Naive thymus-derived CD4-positive, alpha-beta T cell (primary cell): ENCODE measurements at regions of chr2 and their contacts with region 1.

Region 1: GRCh38 chr2:238203094-238203972 is at the start of gene ILKAP:
- DNase-seq: peak; percentile 87 to 95 (median 92)
- ATAC-seq: peak; percentile 98
- H3K4me3 ChIP-seq: peak within 1 kb of the TSS; percentile 67
- H3K4me3 Mint-ChIP-seq: peak within 1 kb of the TSS; percentile 84 to 94 (median 88)
- H3K27ac ChIP-seq: peak within 1 kb of the TSS; percentile 91
- H3K27ac Mint-ChIP-seq: peak within 1 kb of the TSS; percentile 84 to 95 (median 92)
- H3K4me1 ChIP-seq: peaks cover 20 to 35% of the 10 kb centered on the region in 2 donors
- H3K4me1 Mint-ChIP-seq: peaks cover 28 to 55% (median 43%) of the 10 kb centered on the region in 7 donors
- H3K27me3 ChIP-seq: no peaks in the 10 kb centered on the region
- H3K27me3 Mint-ChIP-seq: peaks cover 0 to 4% (median 0%) of the 10 kb centered on the region in 5 donors
- total RNA-seq, gene ILKAP: 68.1 to 126 (median 90.9) TPM

Region 2: DNA sequence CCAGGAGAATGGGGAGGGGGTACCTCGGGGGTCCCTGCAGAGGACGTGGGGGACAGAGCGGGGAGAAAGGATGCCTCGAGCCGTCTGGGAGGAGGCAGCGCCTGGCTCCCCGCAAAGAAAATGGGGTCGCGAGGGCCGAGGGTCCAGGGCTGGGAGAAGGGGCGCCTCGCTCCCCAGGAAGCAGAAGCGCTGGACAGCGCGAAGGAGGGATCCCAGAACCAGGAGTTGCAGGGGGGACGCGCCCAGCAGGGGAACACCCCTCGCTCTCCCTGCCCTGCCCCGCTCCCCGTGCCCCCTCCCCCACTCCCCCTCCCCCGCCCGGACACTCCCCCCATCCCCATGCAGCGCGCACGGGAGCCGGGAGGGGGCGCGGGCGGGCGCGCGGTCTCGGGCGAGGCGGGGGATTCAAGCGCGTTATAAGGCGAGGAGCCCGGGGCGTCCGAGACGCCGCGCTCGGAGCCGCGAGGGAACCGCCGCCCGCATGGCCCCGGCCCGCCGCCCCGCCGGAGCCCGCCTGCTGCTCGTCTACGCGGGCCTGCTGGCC is 44.7 kb before region 1 on chr2 and contains the start of gene ERFE:
- CTCF ChIA-PET with region 1: no interaction called
- POLR2A ChIA-PET with region 1: no interaction called
- intact Hi-C with region 1: loop called in 1 of 2 experiments (anchors 5 kb)
- DNase-seq: peak in 8 of 9 donors; percentile 16 to 74 (median 40)
- ATAC-seq: peak; percentile 80
- H3K4me3 ChIP-seq: no peak within 1 kb of the TSS
- H3K4me3 Mint-ChIP-seq: peak within 1 kb of the TSS; percentile 54 to 79 (median 72)
- H3K27ac ChIP-seq: no peak within 1 kb of the TSS
- H3K27ac Mint-ChIP-seq: no peak within 1 kb of the TSS
- H3K4me1 ChIP-seq: peaks cover 0 to 11% of the 10 kb centered on the region in 2 donors
- H3K4me1 Mint-ChIP-seq: peaks cover 0 to 9% (median 6%) of the 10 kb centered on the region in 7 donors
- H3K27me3 ChIP-seq: no peaks in the 10 kb centered on the region
- H3K27me3 Mint-ChIP-seq: peaks cover 7 to 26% (median 13%) of the 10 kb centered on the region in 5 donors
- total RNA-seq, gene ERFE: 0.29 to 0.31 TPM in 2 of 5 experiments, not detected in the others

Region 3: GRCh38 chr2:238231251-238231793 is 28.0 kb after region 1 on chr2:
- CTCF ChIA-PET with region 1: no interaction called
- POLR2A ChIA-PET with region 1: interaction called, 17 read pairs
- intact Hi-C with region 1: loop called (anchors 1 kb)
- DNase-seq: peak; percentile 37 to 84 (median 76)
- ATAC-seq: peak; percentile 94
- H3K4me3 ChIP-seq: peak overlapping the region; percentile 66
- H3K4me3 Mint-ChIP-seq: peak overlapping the region; percentile 70 to 91 (median 86)
- H3K27ac ChIP-seq: peak overlapping the region; percentile 31
- H3K27ac Mint-ChIP-seq: peak overlapping the region in 7 of 9 donors; percentile 39 to 86 (median 76)
- H3K4me1 ChIP-seq: peaks cover 5 to 8% of the 10 kb centered on the region in 2 donors
- H3K4me1 Mint-ChIP-seq: peaks cover 14 to 33% (median 26%) of the 10 kb centered on the region in 7 donors
- H3K27me3 ChIP-seq: peaks cover 0 to 5% of the 10 kb centered on the region in 2 donors
- H3K27me3 Mint-ChIP-seq: peaks cover 11 to 63% (median 16%) of the 10 kb centered on the region in 5 donors

Region 4: GRCh38 chr2:238239872-238240751 is 36.8 kb after region 1 on chr2 and contains the start of gene HES6:
- CTCF ChIA-PET with region 1: no interaction called
- POLR2A ChIA-PET with region 1: interaction called, 4 read pairs
- intact Hi-C with region 1: loop called in 1 of 2 experiments (anchors 1 kb)
- DNase-seq: peak; percentile 50 to 84 (median 61)
- ATAC-seq: peak; percentile 90
- H3K4me3 ChIP-seq: peak within 1 kb of the TSS; percentile 59
- H3K4me3 Mint-ChIP-seq: peak within 1 kb of the TSS; percentile 88 to 98 (median 94)
- H3K27ac ChIP-seq: no peak within 1 kb of the TSS
- H3K27ac Mint-ChIP-seq: peak within 1 kb of the TSS in 6 of 9 donors; percentile 28 to 86 (median 80)
- H3K4me1 ChIP-seq: peaks cover 0 to 4% of the 10 kb centered on the region in 2 donors
- H3K4me1 Mint-ChIP-seq: peaks cover 2 to 17% (median 8%) of the 10 kb centered on the region in 7 donors
- H3K27me3 ChIP-seq: peaks cover 0 to 16% of the 10 kb centered on the region in 2 donors
- H3K27me3 Mint-ChIP-seq: peaks cover 11 to 49% (median 13%) of the 10 kb centered on the region in 5 donors
- total RNA-seq, gene HES6: 0.73 to 2.7 (median 2.4) TPM

Region 5: DNA sequence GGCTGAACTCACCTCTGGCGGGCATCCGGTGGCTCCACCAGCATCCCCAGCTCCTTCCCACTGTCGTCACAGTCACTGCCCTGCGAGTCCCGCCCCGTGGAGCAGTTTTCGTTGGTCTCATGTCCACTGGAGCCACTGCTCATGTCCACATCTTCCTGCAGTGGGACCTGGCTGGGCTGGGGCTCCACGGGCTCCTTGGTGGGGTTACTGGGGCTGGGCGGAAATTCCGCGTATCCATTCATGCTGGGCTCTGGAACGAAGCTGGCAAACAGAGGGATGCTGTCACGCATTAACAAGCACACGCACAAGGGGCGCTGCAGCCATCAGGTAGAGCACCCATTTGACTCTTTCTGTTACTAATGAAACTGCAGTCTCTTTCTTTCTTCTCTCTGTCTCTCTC is 74.4 kb after region 1 on chr2:
- CTCF ChIA-PET with region 1: no interaction called
- POLR2A ChIA-PET with region 1: no interaction called
- intact Hi-C with region 1: no loop called
- DNase-seq: no peak
- ATAC-seq: no peak
- H3K4me3 ChIP-seq: no peak overlapping the region
- H3K4me3 Mint-ChIP-seq: no peak overlapping the region
- H3K27ac ChIP-seq: no peak overlapping the region
- H3K27ac Mint-ChIP-seq: peak overlapping the region in 1 of 9 donors; percentile 28
- H3K4me1 ChIP-seq: no peaks in the 10 kb centered on the region
- H3K4me1 Mint-ChIP-seq: peaks cover 0 to 25% (median 19%) of the 10 kb centered on the region in 7 donors
- H3K27me3 ChIP-seq: no peaks in the 10 kb centered on the region
- H3K27me3 Mint-ChIP-seq: no peaks in the 10 kb centered on the region